SK-N-SH (cell line): ENCODE measurements at regions of chr7 and their contacts with region 1.

Region 1: DNA sequence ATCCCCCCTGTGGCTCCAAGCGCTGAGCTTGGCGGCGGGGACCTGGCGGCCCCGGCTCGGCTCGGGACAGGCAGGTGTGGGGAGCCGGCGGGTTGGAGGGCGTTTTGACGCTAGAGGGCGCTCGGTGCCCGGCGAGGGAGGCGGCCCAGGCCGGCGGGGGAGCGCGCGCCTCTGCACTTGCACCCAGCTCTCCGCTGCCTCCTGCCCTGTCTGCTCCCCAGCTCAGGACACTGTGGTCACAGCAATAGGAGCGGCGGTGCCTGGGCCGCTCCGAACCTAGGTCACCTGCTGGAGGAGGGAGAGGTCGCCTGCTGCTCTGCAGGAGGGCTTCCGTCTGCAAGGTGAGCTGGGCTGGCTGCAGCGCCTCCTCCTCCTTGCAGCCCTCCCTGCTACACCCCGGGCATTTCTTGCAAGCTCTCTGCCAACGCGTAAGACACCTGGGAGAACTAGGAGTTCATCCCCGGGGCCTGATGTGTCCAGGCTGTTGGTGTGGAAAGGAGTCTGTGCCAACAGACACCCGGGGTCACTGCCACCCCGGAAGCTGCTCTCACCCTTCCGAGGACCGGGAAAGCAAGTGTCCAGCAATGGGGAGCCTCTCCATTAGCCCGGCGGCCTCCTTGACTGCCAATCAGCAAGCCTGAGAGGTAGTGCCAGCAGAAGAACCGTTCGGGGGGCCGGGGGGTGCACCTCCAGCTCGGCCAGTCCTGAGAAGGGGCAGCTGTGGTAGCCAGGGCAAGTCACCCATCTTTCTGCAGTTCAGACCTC is 620.4 kb downstream of the GALNT17 start:
- DNase-seq: peak; percentile 89
- H3K4me3 ChIP-seq: peak overlapping the region in 1 of 2 experiments; percentile 48; a peak in 2 of 4 replicates
- H3K27ac ChIP-seq: no peak overlapping the region
- H3K4me1 ChIP-seq: no peaks in the 10 kb centered on the region
- H3K27me3 ChIP-seq: no peaks in the 10 kb centered on the region
- CTCF ChIP-seq: peak; percentile 70
- EP300 ChIP-seq: no peak
- RAD21 ChIP-seq: peak; percentile 73

Region 2: DNA sequence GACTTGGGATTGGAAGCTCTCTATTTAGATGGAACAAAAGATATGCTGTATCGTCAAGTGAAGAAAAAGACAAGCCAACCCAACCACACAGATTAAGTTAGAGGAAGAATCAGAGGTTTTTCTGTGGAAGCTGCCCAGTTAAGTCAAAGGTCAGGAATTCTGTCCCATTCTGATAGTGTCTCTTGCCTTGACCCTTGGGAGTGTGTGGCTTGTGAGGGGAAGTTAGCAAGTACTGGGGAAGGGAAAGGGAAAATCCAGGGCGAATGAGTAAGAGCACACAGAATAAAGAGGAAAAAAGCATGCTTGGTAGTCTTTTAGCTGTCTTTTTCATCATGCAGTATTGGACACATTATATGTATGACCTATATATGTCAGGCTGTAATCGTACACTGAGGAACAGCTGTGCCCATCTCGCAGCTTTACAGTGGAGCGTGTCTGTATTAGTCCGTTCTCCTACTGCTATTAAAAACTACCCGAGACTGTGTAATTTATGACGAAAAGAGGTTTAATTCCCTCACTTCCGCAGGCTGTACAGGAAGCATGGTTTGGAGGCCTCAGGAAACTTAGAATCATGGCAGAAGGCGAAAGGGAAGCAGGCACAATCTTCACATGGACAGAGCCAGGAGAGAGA is 423.2 kb before region 1 on chr7:
- CTCF ChIA-PET with region 1: no interaction called
- POLR2A ChIA-PET with region 1: no interaction called
- DNase-seq: no peak
- H3K4me3 ChIP-seq: no peak overlapping the region
- H3K27ac ChIP-seq: no peak overlapping the region
- H3K4me1 ChIP-seq: no peaks in the 10 kb centered on the region
- H3K27me3 ChIP-seq: no peaks in the 10 kb centered on the region
- CTCF ChIP-seq: no peak
- EP300 ChIP-seq: no peak
- RAD21 ChIP-seq: no peak

Region 3: DNA sequence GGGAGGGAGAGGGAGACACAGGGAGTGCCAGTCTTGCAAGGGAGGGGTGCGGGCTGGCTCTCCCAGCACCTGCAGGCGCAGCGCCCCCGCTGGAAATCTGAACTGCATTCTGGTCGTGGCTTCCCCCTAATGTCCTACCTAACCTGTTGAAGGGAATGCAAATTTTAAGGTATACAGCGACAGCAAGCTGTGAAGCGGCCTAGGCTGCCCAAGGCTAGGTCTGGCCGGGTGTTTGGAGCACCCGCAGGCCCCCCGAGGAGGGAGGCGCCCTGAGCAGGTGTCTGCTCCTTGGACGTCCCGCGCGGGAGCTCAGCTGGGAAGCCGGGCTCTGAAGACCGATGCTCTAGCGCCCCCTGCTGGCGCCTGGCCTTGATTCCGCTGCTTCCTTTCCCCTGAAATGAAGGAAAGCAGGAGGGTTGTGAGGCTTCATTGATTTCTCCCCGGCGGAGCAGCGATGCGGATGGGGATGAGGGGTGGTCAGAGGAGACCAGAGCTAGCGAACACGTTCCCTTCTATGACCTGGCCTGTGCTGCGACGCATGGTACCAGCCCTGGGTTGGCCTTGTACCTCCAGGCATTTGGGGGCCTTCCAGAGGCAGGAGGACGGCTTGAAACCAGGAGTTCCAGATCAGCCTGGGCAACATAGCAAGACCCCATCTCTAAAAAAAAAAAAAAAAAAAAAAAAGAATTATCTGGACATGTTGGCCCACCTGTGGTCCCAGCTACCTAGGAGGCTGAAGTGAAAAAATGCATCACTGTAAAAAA is 19.1 kb before region 1 on chr7:
- CTCF ChIA-PET with region 1: interaction called, 37 read pairs
- POLR2A ChIA-PET with region 1: no interaction called
- DNase-seq: peak; percentile 89
- H3K4me3 ChIP-seq: peak overlapping the region in 1 of 2 experiments; percentile 27; a peak in 1 of 4 replicates
- H3K27ac ChIP-seq: no peak overlapping the region
- H3K4me1 ChIP-seq: no peaks in the 10 kb centered on the region; a peak in 1 of 4 replicates
- H3K27me3 ChIP-seq: no peaks in the 10 kb centered on the region
- CTCF ChIP-seq: peak; percentile 92
- EP300 ChIP-seq: no peak
- RAD21 ChIP-seq: peak; percentile 84

Region 4: DNA sequence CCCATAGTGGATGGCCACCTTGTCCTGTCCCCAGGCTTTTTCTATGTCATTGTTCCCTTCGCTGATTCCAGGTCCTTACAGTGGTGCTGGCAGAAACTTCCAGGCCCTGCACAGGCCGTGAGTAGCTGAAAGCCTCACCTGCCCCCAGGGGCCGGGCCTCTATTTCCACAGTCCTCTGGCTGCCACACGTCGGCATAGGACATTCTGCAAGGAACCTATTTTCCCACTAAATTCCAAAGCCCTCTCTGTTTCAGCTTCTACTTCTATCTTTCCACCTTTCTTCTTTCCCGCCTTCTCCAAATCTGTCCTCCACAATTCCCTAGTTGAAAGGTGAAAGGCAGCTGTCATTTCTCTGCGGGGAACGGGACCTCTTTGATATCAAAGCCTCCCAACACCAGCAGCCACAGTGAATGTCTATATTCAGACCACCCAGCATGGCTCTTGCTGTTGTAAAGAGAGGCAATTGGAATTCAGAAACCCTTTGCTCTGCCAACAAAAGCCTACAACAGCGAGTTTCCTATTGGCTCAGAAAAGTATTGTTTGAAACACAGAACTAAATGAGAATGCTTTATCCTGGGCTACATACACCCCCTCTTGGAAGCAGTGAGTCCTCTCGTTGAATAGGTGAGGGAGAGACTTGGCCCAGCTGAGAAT is 12.7 kb before region 1 on chr7:
- CTCF ChIA-PET with region 1: interaction called, 37 read pairs
- POLR2A ChIA-PET with region 1: no interaction called
- DNase-seq: no peak
- H3K4me3 ChIP-seq: no peak overlapping the region
- H3K27ac ChIP-seq: no peak overlapping the region
- H3K4me1 ChIP-seq: no peaks in the 10 kb centered on the region
- H3K27me3 ChIP-seq: no peaks in the 10 kb centered on the region
- CTCF ChIP-seq: no peak
- EP300 ChIP-seq: no peak
- RAD21 ChIP-seq: no peak

Region 5: GRCh38 chr7:71772779-71773178 is 20.4 kb after region 1 on chr7:
- CTCF ChIA-PET with region 1: interaction called, 10 read pairs
- POLR2A ChIA-PET with region 1: no interaction called
- DNase-seq: no peak
- H3K4me3 ChIP-seq: no peak overlapping the region
- H3K27ac ChIP-seq: no peak overlapping the region
- H3K4me1 ChIP-seq: no peaks in the 10 kb centered on the region
- H3K27me3 ChIP-seq: no peaks in the 10 kb centered on the region
- CTCF ChIP-seq: no peak
- EP300 ChIP-seq: no peak
- RAD21 ChIP-seq: no peak

Region 6: DNA sequence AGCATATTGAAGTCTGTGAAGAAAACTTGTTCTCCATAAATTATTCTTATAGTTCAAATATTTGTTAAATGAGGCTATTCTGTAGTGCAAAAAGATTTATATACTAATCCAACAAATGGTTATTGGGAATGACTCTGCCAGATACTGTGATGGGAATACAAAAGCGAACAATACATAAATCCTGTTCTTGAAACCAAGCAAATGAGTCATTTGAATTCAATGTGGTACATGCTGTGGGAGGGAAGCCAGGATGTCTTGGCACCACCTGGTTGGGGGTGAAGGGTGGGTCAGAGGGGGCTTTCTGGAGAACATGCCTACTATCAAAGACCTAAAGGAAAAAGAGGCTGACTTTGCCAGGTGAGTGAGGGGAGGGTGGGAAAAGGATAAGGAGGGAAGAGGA is 65.6 kb after region 1 on chr7:
- CTCF ChIA-PET with region 1: no interaction called
- POLR2A ChIA-PET with region 1: no interaction called
- DNase-seq: no peak
- H3K4me3 ChIP-seq: no peak overlapping the region
- H3K27ac ChIP-seq: no peak overlapping the region
- H3K4me1 ChIP-seq: no peaks in the 10 kb centered on the region
- H3K27me3 ChIP-seq: no peaks in the 10 kb centered on the region
- CTCF ChIP-seq: no peak
- EP300 ChIP-seq: no peak
- RAD21 ChIP-seq: no peak

Region 7: DNA sequence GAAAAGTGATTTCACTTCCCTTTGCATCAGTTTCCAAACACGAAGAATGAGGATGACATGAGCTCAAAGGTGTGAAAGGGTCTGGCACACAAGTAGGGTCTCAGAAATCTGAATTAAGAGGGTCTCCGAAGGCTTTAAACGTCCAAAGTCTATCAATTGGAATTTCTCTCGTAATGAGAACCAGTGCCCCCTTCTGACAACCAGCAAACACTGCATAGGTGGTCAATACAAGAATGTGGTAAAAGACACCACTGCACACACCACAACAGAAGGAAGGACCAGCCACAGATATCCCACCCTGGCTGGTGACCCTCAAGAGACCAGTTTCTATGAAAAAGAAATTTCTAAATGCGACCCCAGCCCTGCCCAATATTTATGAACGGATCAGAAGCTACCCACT is 581.7 kb after region 1 on chr7:
- CTCF ChIA-PET with region 1: interaction called, 10 read pairs
- POLR2A ChIA-PET with region 1: no interaction called
- DNase-seq: peak; percentile 40
- H3K4me3 ChIP-seq: no peak overlapping the region; a peak in 1 of 4 replicates
- H3K27ac ChIP-seq: no peak overlapping the region
- H3K4me1 ChIP-seq: no peaks in the 10 kb centered on the region
- H3K27me3 ChIP-seq: peaks cover 36% of the 10 kb centered on the region
- CTCF ChIP-seq: peak; percentile 36; the same call in 1 of the 2 replicates
- EP300 ChIP-seq: no peak
- RAD21 ChIP-seq: peak; percentile 48

Region 8: GRCh38 chr7:72493850-72494661 is 741.7 kb after region 1 on chr7:
- CTCF ChIA-PET with region 1: interaction called, 46 read pairs
- POLR2A ChIA-PET with region 1: no interaction called
- DNase-seq: peak; percentile 65
- H3K4me3 ChIP-seq: peak overlapping the region in 1 of 2 experiments; percentile 49; a peak in 1 of 4 replicates
- H3K27ac ChIP-seq: no peak overlapping the region
- H3K4me1 ChIP-seq: peaks cover 0 to 6% of the 10 kb centered on the region in 2 experiments; a peak in 1 of 4 replicates
- H3K27me3 ChIP-seq: no peaks in the 10 kb centered on the region
- CTCF ChIP-seq: peak; percentile 92
- EP300 ChIP-seq: no peak
- RAD21 ChIP-seq: peak; percentile 67

Region 9: GRCh38 chr7:72785166-72785955 is 1033.0 kb after region 1 on chr7:
- CTCF ChIA-PET with region 1: interaction called, 12 read pairs
- POLR2A ChIA-PET with region 1: no interaction called
- DNase-seq: no peak
- H3K4me3 ChIP-seq: no peak overlapping the region
- H3K27ac ChIP-seq: no peak overlapping the region
- H3K4me1 ChIP-seq: peaks cover 6 to 9% of the 10 kb centered on the region in 2 experiments; a peak in 2 of 4 replicates
- H3K27me3 ChIP-seq: no peaks in the 10 kb centered on the region
- CTCF ChIP-seq: no peak
- EP300 ChIP-seq: no peak
- RAD21 ChIP-seq: no peak